Posterior vena cava (tissue), 2 donors: ENCODE measurements at regions of chr14 and their contacts with region 1.

Region 1: GRCh38 chr14:57747036-57747435 is 118.9 kb downstream of the SLC35F4 start:
- DNase-seq: no peak

Region 2: DNA sequence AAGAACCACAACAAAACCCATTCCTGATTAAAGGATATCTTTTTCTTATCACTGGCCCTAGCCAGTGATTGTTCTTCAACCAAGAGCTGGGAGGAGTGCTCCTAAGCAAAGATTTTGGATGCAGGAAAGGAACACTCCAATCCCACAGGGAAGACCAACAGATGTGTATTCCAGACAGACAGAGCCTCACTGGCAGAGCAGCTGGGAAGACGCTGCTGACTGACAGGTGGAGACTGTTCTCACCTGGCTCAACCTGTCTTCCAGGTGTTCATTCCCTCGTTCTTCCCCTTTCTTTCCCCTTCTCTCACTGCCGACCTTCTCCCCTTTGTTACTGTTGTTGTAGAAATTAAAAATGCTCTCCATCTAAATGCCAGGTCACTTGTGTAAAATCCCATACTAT is 163.6 kb before region 1 on chr14:
- intact Hi-C with region 1: loop called in 1 of 2 experiments (anchors 5 kb)
- DNase-seq: no peak

Region 3: DNA sequence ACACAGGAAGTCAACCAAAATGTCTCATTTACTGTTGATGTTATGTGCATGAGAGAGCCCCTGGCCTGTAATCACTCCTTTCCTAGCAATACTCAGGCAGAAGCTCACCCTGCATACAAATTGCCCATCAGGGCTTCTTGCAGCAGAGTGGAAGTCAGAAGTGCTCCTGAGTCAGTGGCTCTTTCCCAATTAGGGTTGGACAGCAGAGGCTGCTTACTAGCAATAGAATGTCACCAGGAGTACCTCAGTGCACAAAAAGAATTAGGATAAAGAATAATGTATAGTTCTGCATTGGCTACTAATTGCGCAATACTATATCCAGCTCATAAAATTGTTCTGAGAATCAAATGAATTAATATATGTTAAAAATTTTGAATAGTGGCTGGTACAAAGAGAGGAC is 42.3 kb before region 1 on chr14:
- intact Hi-C with region 1: loop called in 1 of 2 experiments (anchors 2 kb)
- DNase-seq: no peak

Region 4: GRCh38 chr14:57732463-57733285 is 14.4 kb before region 1 on chr14:
- intact Hi-C with region 1: no loop called
- DNase-seq: no peak

Region 5: DNA sequence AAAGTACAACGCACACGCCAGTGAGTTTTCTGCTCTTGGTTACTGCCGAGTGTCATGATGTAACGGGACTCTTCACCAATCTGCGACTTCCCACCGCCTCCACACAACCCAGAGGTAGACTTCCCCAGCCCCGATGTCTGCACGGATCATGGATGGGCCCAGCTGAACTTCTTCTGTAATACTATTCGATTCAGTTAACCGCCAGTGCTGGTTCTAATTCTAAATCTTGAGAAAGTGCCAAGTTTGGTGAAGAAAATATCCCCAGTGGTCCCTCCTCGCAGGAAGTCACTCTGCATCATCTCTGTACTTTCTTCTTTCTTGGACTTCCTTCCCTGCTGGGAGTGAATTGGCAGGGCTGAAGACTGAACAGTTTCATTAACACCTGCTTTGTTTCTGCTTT is 196.5 kb after region 1 on chr14:
- intact Hi-C with region 1: no loop called
- DNase-seq: no peak